Endothelial cell of umbilical vein (primary cell): ENCODE measurements at regions of chr19 and their contacts with region 1.

Region 1: DNA sequence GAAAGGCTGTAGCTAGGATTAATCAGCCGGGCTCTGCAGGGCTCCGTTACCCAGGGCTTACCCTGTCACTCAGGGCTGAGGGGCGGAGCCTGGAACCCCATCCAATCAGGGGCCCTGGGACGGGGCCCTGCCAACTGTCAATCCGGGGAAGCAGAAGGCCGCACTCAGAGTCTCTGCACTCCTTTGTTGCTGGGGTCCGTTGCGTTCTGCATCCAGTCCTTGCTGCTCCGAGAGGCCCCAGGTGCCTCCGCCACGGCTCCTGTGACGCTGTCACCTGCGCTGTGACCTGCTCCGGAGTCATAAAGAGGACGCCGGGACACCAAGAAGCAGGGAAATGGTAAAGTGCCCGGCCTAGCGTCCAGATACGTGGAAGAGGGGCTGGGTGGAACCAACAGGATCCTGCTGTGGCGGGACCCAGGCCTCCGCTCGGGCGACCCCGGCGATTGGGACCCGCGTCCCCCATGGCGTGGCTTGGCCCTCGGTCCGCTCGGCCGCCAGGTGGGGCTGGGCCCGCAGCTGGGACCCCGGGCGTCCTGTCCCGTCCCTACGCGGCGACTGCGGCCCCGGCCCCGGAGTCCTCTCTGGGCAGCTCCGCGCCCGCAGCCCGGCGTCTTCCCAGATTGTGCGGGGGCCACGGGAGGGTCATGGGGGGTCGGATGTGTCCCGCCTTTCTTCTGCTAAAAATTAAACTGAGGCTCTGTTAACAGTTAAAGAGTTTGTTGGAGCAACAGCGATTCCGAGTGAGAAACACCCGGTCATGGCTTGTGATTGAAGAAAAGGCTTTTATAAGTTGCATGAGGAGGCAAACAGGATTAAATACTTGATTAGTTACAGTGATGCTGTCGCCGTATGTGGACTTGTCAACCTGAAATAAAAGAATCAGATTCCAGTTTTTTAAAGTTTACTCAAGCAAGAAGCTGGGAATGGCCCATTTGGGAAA is at the start of gene ZNF491:
- DNase-seq: peak; percentile 83
- H3K4me3 ChIP-seq: peak within 1 kb of the TSS; percentile 39 to 75 (median 62)
- H3K27ac ChIP-seq: no peak within 1 kb of the TSS
- H3K4me1 ChIP-seq: peaks cover 7% of the 10 kb centered on the region
- H3K27me3 ChIP-seq: no peaks in the 10 kb centered on the region
- CTCF ChIP-seq: peak; percentile 13 to 21
- POLR2A ChIP-seq: peak; percentile 52
- total RNA-seq, gene ZNF491: 0.85 and 1.1 TPM in 2 replicates

Region 2: GRCh38 chr19:11673608-11674041 is 125.0 kb before region 1 on chr19:
- CTCF ChIA-PET with region 1: interaction called, 7 read pairs
- POLR2A ChIA-PET with region 1: no interaction called
- dilution Hi-C with region 1: no loop called
- intact Hi-C with region 1: loop called (anchors 1 kb)
- DNase-seq: peak; percentile 81
- H3K4me3 ChIP-seq: peak overlapping the region in 2 of 3 experiments; percentile 36 to 51
- H3K27ac ChIP-seq: no peak overlapping the region
- H3K4me1 ChIP-seq: peaks cover 6% of the 10 kb centered on the region
- H3K27me3 ChIP-seq: no peaks in the 10 kb centered on the region
- CTCF ChIP-seq: peak; percentile 79 to 86
- POLR2A ChIP-seq: no peak

Region 3: DNA sequence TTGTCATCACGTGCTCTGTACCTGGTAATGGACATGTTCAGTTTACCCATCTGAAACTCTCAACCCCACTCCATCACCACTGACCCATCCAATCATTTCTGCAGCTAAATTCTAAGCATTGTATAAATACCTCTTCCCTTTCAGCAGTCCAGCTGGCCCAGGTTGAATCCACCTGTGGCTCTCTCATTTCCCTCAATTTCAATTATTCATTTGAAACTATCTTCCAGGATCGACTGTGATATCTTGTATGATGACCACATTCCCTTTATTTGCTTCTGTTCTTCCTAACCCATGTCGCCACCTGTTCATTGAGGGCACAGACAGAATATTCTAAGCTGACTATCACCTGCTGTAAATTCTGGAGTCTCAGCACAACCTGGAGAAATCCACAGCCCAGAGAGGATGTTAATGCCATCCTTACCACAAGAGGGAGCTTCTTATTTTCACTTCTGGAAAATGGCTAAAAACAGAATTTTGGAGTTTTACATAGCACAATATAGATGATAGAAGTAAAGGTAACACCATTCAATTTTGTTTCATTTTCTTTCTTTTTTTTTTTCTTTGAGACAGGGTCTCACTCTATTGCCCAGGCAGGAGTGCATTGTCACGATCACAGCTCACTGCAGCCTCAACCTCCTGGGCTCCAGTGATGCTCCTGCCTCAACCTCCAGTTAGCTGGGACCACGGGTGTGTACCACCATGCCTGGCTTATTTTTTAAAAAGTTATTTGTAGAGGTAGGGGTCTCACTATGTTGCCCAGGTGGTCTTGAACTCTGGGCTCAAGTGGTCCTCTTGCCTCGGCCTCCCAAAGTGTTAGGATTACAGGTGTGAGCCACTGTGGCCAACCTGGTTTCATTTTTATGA is 98.5 kb before region 1 on chr19:
- CTCF ChIA-PET with region 1: interaction called, 10 read pairs
- POLR2A ChIA-PET with region 1: no interaction called
- dilution Hi-C with region 1: no loop called
- intact Hi-C with region 1: no loop called
- DNase-seq: peak; percentile 34
- H3K4me3 ChIP-seq: no peak overlapping the region
- H3K27ac ChIP-seq: no peak overlapping the region
- H3K4me1 ChIP-seq: peaks cover under 1% of the 10 kb centered on the region
- H3K27me3 ChIP-seq: no peaks in the 10 kb centered on the region
- CTCF ChIP-seq: peak; percentile 47 to 58
- POLR2A ChIP-seq: no peak

Region 4: GRCh38 chr19:11814029-11814699 is 15.5 kb after region 1 on chr19 and contains the start of gene ZNF440:
- CTCF ChIA-PET with region 1: interaction called, 16 read pairs
- POLR2A ChIA-PET with region 1: no interaction called
- dilution Hi-C with region 1: no loop called
- intact Hi-C with region 1: loop called (anchors 2 kb)
- DNase-seq: peak; percentile 95
- H3K4me3 ChIP-seq: peak within 1 kb of the TSS; percentile 61 to 70 (median 69)
- H3K27ac ChIP-seq: no peak within 1 kb of the TSS
- H3K4me1 ChIP-seq: peaks cover 6% of the 10 kb centered on the region
- H3K27me3 ChIP-seq: no peaks in the 10 kb centered on the region
- CTCF ChIP-seq: no peak
- POLR2A ChIP-seq: peak; percentile 95
- total RNA-seq, gene ZNF440: 9.1 and 13.3 TPM in 2 replicates

Region 5: DNA sequence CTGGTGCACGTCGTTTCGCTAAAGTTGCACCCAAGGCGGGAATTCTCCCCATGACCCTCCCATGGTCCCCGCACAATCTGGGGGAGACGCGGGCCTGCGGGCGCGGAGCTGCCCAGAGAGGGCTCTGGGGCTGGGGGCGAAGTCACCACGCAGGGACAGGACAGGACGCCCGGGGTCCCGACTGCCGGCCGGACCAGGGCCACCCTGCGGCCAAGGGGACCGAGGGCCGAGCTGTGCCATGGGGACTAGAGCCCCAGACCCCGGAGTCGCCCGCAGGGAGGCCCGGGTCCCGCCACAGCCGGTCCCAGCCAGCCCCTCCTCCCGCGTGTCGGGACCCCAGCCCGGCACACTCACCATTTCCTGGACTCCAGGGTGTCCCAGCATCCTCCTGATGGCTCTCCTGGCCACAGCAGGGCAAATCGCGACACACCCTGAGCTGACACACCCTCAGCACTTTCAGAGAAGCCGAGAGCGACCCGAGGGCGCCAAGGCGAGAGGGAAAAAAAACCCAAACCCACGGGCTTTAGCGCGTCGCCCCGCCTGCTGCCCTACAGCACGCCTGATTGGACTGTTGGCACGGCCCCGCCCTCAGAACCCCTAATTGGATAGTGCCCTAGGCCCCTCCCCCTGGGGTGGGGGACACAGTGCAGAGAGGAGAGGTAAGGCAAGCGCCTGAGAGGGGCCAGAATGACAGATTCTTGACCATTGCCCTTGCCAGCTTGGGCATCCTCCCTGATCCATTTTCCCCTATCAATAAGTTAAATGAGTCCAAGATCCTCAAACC is 467.5 kb after region 1 on chr19:
- CTCF ChIA-PET with region 1: no interaction called
- POLR2A ChIA-PET with region 1: no interaction called
- dilution Hi-C with region 1: no loop called
- intact Hi-C with region 1: no loop called
- DNase-seq: no peak
- H3K4me3 ChIP-seq: no peak overlapping the region
- H3K27ac ChIP-seq: no peak overlapping the region
- H3K4me1 ChIP-seq: no peaks in the 10 kb centered on the region
- H3K27me3 ChIP-seq: no peaks in the 10 kb centered on the region
- CTCF ChIP-seq: no peak
- POLR2A ChIP-seq: no peak

Region 6: DNA sequence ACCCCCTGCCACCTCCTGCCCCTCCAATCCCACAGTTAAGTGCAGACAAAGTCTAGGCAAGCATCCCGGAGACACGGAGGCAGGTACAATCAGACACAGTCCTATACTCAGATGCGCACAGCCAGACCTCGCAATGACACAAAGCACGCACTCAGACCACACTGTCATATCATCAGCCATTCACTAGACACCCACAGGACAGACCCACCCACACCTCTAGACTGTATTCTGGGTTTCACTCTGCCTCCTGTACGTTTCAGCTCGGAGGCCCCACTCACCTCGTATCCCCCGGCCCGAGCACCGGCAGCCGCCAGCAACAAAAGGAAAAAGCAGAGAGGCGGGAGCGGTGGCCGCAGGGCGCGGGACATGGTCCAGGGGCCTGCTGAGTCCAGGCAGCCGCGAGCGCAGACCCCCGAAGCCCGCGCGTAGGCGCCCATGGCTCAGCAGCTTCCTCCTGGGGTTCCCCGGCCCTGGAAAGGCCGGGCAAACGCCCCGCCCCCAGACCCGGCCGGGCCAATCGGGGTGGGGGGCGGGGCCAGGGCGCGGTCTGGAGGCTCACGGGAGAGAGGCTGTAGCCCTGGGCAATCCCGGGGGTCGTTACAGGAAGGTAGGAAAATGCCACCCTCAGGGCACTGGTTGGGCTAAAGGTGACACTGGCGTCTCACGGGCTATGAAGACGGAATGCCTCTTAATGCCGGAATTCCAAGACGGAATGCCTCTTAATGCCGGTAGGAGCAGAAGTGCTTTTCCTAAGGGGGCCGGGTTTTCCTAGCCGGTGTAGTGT is 867.8 kb after region 1 on chr19 and contains the starts of genes MAN2B1 and WDR83:
- CTCF ChIA-PET with region 1: interaction called, 13 read pairs
- POLR2A ChIA-PET with region 1: no interaction called
- dilution Hi-C with region 1: no loop called
- intact Hi-C with region 1: no loop called
- DNase-seq: peak; percentile 82
- H3K4me3 ChIP-seq: peak within 1 kb of the TSS; percentile 60 to 73 (median 67)
- H3K27ac ChIP-seq: peak within 1 kb of the TSS; percentile 38
- H3K4me1 ChIP-seq: peaks cover 20% of the 10 kb centered on the region
- H3K27me3 ChIP-seq: no peaks in the 10 kb centered on the region
- CTCF ChIP-seq: no peak
- POLR2A ChIP-seq: peak; percentile 49
- total RNA-seq, gene MAN2B1: 73.0 and 76.8 TPM in 2 replicates
- total RNA-seq, gene WDR83: 10.9 and 11.8 TPM in 2 replicates